AG04449 (cell line): ENCODE measurements at regions of chr11 and their contacts with region 1.

Region 1: GRCh38 chr11:33987975-33988580 is 63.5 kb upstream of the CAPRIN1 start:
- DNase-seq: no peak
- H3K4me3 ChIP-seq: no peak overlapping the region
- CTCF ChIP-seq: peak; percentile 76

Region 2: DNA sequence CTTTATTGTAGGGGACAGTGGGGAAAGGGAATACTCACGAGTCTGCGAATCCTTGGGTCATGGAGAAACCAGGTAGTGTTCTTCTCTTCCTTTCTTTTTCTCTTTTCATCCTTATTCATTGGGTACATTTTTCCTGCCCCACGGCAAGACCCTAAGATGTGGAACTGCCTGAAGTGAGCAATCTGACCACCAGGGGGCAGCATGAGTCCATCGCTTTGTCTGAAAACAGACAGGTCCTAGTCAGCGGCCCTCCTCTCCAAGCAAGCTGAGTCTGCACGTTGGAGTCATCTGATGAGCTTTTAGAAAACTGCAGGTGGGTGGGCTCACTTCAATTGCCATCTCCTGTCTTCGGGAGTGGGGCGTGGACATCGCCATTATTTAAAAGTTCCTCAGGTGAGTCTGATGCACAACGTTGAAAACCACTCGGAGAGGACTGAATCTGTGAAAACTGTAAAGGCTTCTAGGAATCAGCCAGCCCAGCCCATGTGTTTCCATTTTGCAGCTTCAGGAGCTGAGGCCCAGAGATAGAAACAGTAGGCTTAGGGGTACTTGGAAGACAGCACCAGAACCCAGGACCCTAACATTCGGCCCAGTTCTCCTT is 179.8 kb before region 1 on chr11:
- CTCF ChIA-PET with region 1: interaction called, 44 read pairs
- POLR2A ChIA-PET with region 1: no interaction called
- DNase-seq: peak; percentile 26
- H3K4me3 ChIP-seq: no peak overlapping the region
- CTCF ChIP-seq: peak; percentile 87

Region 3: GRCh38 chr11:33829433-33830141 is 158.5 kb before region 1 on chr11:
- CTCF ChIA-PET with region 1: interaction called, 16 read pairs
- POLR2A ChIA-PET with region 1: no interaction called
- DNase-seq: peak; percentile 12
- H3K4me3 ChIP-seq: peak overlapping the region; percentile 53
- CTCF ChIP-seq: peak; percentile 73

Region 4: GRCh38 chr11:33835143-33835878 is 152.8 kb before region 1 on chr11:
- CTCF ChIA-PET with region 1: interaction called, 16 read pairs
- POLR2A ChIA-PET with region 1: no interaction called
- DNase-seq: peak; percentile 53
- H3K4me3 ChIP-seq: no peak overlapping the region
- CTCF ChIP-seq: no peak

Region 5: DNA sequence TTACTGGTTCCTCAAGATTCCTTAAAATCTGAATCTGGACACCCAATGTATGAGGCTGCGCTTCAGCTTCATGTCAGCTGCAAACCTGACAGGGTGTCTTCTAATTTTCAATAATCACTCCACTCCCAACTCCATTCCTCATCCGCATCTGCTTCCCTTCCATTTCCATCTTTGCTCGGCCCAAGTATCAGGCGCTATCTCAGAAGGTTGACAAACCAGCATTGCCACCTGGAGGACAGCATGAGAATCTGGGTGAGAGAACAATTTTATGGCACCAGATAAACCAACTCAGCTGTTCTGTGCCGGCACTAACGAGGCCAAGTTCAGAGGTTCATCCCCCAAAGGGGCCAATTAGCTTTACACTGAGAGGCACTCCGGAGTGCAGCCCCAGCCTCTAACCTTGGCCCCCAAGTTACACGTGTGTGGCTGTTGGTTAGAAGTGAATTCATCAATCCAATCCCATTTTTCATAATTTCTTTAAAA is 17.1 kb before region 1 on chr11:
- CTCF ChIA-PET with region 1: interaction called, 34 read pairs
- POLR2A ChIA-PET with region 1: no interaction called
- DNase-seq: no peak
- H3K4me3 ChIP-seq: no peak overlapping the region
- CTCF ChIP-seq: peak; percentile 69

Region 6: GRCh38 chr11:33976495-33977199 is 11.4 kb before region 1 on chr11:
- CTCF ChIA-PET with region 1: interaction called, 34 read pairs
- POLR2A ChIA-PET with region 1: no interaction called
- DNase-seq: peak; percentile 41
- H3K4me3 ChIP-seq: no peak overlapping the region
- CTCF ChIP-seq: no peak

Region 7: DNA sequence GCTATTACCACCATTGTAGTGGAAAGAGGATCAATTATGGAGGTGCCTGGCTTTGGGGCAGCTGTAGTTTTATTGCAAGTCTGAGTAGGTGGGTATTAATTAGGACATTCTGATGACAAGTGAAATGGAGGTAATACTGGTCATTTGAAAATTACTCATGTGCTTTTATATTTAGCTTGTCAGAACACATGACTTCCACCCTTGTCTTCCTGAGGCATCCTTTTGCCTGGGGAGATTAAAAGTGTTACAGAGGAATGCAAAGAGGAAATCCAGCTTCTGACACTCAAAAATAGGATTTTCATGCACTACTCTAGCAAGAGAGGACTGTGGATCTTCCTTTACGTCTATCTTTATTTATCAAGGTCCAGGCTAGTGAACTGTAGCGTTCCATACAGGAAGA is 18.8 kb after region 1 on chr11:
- CTCF ChIA-PET with region 1: interaction called, 20 read pairs
- POLR2A ChIA-PET with region 1: no interaction called
- DNase-seq: no peak
- H3K4me3 ChIP-seq: no peak overlapping the region
- CTCF ChIP-seq: no peak